ENCODE measurements at regions of chr11 and their contacts with region 1.

Region 1: DNA sequence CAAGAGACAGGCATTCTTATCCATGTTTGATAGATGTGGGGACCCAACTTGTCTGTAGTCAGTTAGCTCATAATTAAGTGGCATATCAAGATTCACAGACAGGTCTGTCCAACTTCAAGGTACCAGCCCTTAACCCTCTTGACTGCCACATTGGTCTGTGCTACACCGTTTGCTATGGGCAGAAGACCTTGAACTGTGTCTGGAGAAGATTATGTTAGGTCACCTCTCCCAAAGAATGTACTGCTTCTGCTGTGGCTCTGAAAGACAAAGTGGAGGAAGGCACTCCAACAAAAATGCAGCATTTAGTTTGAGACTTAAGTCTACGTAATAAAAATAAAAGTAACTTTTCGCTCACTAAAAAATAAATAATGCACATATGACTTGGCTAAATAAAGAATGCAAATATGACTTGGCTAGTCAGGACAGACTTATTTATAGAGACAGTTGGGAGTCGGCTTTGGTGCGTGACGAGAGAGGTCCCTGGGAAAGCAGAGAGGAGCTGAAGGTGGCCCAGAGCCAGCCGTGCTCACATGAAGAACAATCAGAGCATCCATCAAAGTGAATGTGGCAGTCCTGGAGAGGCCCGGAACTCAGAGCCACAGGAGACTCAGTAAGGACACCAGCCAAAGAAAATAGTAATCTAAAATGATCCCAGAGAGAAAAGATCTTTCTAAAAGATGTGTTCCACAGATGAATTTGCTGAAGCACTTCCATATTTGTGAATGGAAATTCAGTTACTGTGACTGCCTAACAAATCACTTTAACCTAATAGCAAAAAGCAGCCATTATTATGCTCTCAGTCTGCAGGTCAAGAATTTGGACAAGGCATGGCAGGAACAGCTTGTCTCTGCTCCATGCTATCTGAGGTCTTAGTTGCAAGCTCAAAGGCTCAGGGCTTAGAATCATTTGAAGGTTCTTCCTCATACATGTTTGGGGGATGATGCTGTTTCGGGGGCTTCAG is 35.0 kb downstream of the CWC15 start:
- DNase-seq: peak; percentile 90
- H3K4me3 ChIP-seq: no peak overlapping the region
- H3K27ac ChIP-seq: peak overlapping the region; percentile 37
- H3K4me1 ChIP-seq: peaks cover 41% of the 10 kb centered on the region
- H3K27me3 ChIP-seq: no peaks in the 10 kb centered on the region
- CTCF ChIP-seq: no peak
- POLR2A ChIP-seq: no peak

Region 2: GRCh38 chr11:94134651-94135512 is 803.5 kb before region 1 on chr11:
- CTCF ChIA-PET with region 1: no interaction called
- POLR2A ChIA-PET with region 1: no interaction called
- dilution Hi-C with region 1: no loop called
- intact Hi-C with region 1: loop called (anchors 10 kb)
- DNase-seq: peak; percentile 93
- H3K4me3 ChIP-seq: peak overlapping the region in 2 of 3 experiments; percentile 20 to 32
- H3K27ac ChIP-seq: peak overlapping the region; percentile 98
- H3K4me1 ChIP-seq: peaks cover 51% of the 10 kb centered on the region
- H3K27me3 ChIP-seq: no peaks in the 10 kb centered on the region
- CTCF ChIP-seq: no peak
- POLR2A ChIP-seq: no peak

Region 3: DNA sequence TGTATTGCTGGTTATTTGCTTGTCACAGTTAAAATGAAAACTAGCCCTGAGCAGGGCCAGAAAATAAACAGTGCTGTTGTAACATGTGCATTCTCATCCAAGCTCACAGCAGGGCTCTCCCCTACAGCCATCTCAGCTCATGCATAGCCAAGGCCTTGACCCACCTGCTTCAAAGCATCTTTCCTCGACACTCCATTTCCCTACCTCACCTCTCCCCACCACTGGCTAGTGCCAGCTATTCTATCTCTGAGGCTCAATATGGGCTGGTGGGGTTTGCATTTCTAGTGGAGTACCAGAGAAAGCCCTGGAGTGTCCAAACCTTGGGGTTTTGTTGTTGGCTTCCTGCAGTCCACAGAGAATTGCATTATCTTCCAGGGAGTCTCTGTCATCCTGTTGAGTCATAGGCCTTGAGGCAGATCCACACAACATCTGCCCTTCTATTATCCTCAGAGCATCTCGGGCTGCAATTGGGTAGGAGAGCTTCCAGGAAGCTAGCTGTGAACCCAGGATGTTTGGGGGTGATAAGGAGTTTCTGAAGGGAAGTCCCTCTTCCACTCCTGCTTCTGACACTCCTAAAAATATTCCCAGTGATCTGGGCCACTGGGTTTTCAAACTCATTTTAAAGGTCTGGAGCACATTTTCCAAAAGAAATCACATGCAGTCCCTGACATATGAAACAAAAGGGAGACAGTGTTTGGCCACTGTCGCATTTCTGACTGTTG is 206.3 kb before region 1 on chr11:
- CTCF ChIA-PET with region 1: no interaction called
- POLR2A ChIA-PET with region 1: no interaction called
- dilution Hi-C with region 1: no loop called
- intact Hi-C with region 1: loop called (anchors 1 kb)
- DNase-seq: peak; percentile 38
- H3K4me3 ChIP-seq: no peak overlapping the region
- H3K27ac ChIP-seq: peak overlapping the region; percentile 79
- H3K4me1 ChIP-seq: peaks cover 35% of the 10 kb centered on the region
- H3K27me3 ChIP-seq: no peaks in the 10 kb centered on the region
- CTCF ChIP-seq: no peak
- POLR2A ChIP-seq: no peak

Region 4: DNA sequence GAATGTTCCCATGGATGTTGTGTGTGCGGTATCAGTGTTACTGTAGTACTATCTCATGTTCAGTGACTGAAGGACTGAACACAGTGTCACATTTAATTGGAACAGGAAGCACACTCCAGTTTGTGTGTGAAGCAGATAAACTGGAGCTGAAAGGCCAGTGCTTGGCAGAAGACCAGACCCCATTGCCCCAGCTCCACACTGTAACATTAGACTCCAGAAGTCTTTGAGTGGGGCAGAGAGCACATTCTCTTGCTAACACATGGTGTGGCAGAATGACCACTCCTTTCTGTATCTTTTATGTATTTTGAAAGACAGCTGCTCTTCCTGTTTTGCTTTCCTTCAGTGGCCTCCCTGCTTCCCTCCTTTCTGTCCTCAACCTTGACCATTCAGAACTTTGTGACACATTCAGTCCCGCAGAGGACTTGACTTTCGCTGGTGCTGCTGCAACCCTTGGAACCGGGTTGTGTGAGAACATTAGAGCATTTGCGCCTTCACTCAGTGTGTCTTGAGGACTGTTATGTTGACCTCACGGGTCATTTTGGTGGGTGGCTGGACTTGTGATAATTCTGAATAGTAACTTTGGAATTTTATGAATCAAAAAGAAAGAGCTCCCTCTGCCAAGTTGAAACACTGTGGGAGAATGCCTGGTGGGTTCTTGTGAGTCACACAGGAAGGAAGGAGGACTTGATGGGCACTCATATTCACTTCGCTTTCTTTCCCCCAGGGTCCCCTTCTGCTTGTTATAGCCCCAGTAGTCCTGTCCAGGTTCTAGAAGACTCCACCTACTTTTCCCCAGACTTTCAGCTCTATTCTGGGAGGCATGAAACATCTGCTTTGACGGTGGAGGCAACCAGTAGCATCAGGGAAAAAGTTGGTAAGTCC is 143.8 kb before region 1 on chr11:
- CTCF ChIA-PET with region 1: no interaction called
- POLR2A ChIA-PET with region 1: interaction called, 5 read pairs
- dilution Hi-C with region 1: no loop called
- intact Hi-C with region 1: loop called (anchors 1 kb)
- DNase-seq: peak; percentile 93
- H3K4me3 ChIP-seq: peak overlapping the region in 2 of 3 experiments; percentile 4 to 15
- H3K27ac ChIP-seq: peak overlapping the region; percentile 90
- H3K4me1 ChIP-seq: peaks cover 44% of the 10 kb centered on the region
- H3K27me3 ChIP-seq: no peaks in the 10 kb centered on the region
- CTCF ChIP-seq: no peak
- POLR2A ChIP-seq: no peak

Region 5: DNA sequence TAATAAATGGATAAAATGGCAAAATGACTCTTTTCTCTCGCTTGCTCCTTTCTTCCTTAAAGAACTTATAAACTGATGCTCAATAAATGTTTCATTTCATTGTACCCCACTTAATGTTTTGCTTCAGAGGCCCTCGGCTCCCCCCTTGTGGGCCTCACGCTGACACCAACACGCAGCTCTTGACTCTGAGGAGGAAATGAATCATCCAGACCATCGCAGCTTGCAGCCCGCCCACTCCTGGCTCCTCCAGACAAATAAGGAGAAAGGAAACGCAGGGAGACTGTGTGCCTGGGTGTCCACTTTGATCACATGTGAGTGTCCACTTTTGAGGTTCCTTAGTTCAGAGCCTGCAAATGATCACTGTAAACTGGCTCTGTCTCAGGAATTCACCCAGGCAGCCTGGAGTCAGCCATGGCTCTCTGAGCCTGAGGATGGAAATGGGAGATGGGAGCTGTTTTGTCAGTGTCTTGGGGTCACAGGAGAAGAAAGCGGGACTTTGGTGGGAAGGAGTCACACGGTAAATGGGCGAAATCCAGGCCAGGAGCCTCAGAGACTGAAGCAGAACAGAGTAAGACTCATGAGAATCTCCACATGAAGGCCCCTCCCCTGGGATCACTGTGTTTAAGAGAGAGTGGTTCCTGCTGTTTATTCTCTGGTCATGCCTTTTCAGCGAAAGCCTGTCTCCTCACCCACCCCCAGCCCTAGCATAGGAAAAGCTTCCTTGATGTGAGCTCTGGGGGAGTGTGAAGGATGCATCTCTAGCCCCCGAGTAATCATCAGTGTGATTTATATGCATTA is 61.5 kb before region 1 on chr11:
- CTCF ChIA-PET with region 1: no interaction called
- POLR2A ChIA-PET with region 1: no interaction called
- dilution Hi-C with region 1: no loop called
- intact Hi-C with region 1: loop called (anchors 1 kb)
- DNase-seq: peak; percentile 94
- H3K4me3 ChIP-seq: no peak overlapping the region
- H3K27ac ChIP-seq: peak overlapping the region; percentile 75
- H3K4me1 ChIP-seq: peaks cover 14% of the 10 kb centered on the region
- H3K27me3 ChIP-seq: no peaks in the 10 kb centered on the region
- CTCF ChIP-seq: peak; percentile 28 to 32
- POLR2A ChIP-seq: no peak

Region 6: DNA sequence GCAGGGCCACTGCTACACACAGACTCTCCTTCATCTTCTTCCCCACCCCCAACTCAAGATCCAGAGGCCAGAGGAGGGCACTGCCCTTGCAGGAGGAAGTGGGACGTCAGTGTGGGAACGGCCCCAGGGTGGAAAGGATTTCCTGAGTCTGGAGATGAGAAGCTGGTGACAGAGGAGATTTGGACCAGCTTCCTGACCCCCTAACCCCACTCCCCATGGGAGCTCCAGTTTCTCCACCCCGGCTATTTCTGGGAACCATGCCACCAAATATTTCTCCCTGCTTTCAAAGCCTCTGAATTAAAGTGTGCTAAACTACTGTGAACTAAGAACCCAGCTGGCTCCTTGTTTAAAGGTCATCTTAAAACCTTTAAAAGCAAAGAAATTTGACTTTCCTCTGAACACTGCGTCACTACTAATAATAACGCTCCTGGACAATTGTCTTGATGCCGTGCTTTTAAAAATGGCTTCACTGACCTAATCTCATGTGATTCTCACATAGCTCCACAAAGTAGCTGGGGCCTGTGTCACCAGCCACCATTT is 11.6 kb before region 1 on chr11:
- CTCF ChIA-PET with region 1: interaction called, 3 read pairs
- POLR2A ChIA-PET with region 1: no interaction called
- dilution Hi-C with region 1: no loop called
- intact Hi-C with region 1: loop called (anchors 1 kb)
- DNase-seq: peak; percentile 94
- H3K4me3 ChIP-seq: no peak overlapping the region
- H3K27ac ChIP-seq: peak overlapping the region; percentile 92
- H3K4me1 ChIP-seq: peaks cover 39% of the 10 kb centered on the region
- H3K27me3 ChIP-seq: no peaks in the 10 kb centered on the region
- CTCF ChIP-seq: no peak
- POLR2A ChIP-seq: peak; percentile 43

Measured in endothelial cell of umbilical vein (primary cell).